ENCODE measurements at regions of chr11 and their contacts with region 1.

Region 1: GRCh38 chr11:34364102-34364501 is 6.3 kb upstream of the ABTB2 start:
- DNase-seq: no peak
- H3K4me3 ChIP-seq: no peak overlapping the region
- H3K27ac ChIP-seq: no peak overlapping the region
- H3K4me1 ChIP-seq: no peaks in the 10 kb centered on the region
- H3K27me3 ChIP-seq: no peaks in the 10 kb centered on the region
- CTCF ChIP-seq: no peak
- POLR2A ChIP-seq: no peak

Region 2: DNA sequence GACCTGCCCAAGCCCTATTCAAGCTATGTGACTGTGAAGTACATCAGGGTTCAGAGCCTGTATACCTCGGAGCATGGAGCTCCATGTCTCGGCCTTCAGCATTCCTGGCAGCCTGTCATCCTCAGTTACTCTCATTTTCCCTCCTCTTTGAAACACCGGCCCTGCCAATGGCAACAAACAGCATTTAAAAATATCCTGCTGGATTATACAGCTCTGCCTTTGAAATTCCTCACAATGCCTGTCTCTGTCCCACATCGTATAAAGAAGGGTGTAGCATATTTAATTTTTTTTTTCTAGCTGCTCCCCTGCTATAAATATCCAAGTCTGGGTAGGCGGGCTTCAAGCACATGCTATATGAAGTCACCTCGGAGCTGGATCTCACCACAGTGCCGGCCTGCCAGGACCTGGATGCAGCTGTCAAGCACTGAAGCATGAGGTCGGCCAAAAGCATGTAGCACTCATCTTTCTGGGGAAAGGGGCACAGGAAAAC is 18.1 kb before region 1 on chr11:
- intact Hi-C with region 1: no loop called
- DNase-seq: no peak
- H3K4me3 ChIP-seq: no peak overlapping the region
- H3K27ac ChIP-seq: peak overlapping the region in 1 of 2 donors; percentile 14
- H3K4me1 ChIP-seq: no peaks in the 10 kb centered on the region
- H3K27me3 ChIP-seq: no peaks in the 10 kb centered on the region
- CTCF ChIP-seq: no peak
- POLR2A ChIP-seq: no peak

Region 3: DNA sequence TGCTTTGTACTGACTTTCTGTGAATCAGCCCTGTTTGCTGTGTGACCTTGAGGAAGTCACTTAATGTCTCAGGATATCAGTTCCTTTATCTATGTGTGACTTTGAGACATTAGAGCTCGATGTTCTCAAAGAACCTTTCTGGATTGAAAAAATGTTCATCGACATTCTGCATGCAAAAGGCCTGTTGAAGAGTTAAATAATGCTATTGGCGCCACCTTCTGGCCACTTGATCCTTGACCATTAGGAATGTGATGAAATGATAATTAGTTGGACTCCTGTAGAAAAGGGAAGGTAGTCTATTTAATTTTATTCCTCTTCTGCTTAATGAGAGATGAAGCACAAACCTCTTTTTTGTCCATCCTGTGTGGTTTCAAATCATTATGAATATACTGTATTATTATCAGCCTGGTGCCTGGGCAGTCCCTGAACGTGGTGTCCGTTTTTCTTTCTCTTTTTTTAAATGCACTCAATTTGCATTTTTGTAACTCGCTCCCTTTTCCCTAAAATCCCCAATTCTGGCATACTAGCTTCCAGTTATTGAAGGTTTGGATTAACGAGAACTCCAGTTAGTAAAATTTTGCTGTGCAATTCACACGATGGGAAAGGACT is 128.8 kb after region 1 on chr11:
- intact Hi-C with region 1: loop called (anchors 5 kb)
- DNase-seq: peak; percentile 44
- H3K4me3 ChIP-seq: no peak overlapping the region
- H3K27ac ChIP-seq: no peak overlapping the region
- H3K4me1 ChIP-seq: no peaks in the 10 kb centered on the region
- H3K27me3 ChIP-seq: no peaks in the 10 kb centered on the region
- CTCF ChIP-seq: peak; percentile 64 to 74 (median 70)
- POLR2A ChIP-seq: no peak

Measured in prostate gland (tissue), 2 donors.